ENCODE measurements at regions of chr1 and their contacts with region 1.

Region 1: DNA sequence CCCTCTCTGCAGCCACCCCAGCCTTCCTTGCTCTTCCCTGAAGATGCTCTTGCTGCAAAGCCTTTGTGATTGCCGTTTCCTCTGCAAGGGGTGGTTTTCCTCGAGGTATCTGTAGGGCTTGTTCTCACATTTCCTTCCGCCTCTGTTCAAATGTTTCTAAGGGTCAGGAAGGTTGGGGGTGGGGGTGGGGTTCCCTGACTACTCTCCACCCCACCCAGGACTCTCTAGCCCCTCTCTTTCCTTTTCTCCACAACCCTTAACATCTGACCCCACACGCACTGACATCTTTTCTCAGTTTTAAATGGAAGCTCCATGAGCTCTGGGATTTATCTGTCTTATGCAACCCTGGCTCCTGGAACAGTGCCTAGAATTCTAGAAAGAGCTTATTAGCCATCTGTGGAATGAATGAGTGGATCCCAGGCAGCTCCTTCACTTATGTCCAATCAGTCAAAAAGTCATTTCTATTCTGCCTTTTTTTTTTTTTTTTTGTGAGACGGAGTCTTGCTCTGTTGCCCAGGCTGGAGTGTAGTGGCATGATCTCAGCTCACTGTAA is 27.3 kb upstream of the ZNF362 start:
- DNase-seq: peak in 2 of 10 donors; percentile 12 to 69
- H3K4me3 ChIP-seq: no peak overlapping the region
- H3K27ac ChIP-seq: peak overlapping the region in 6 of 59 donors; percentile 20 to 46 (median 32)
- H3K27me3 ChIP-seq: no peaks in the 10 kb centered on the region
- CTCF ChIP-seq: no peak

Region 2: DNA sequence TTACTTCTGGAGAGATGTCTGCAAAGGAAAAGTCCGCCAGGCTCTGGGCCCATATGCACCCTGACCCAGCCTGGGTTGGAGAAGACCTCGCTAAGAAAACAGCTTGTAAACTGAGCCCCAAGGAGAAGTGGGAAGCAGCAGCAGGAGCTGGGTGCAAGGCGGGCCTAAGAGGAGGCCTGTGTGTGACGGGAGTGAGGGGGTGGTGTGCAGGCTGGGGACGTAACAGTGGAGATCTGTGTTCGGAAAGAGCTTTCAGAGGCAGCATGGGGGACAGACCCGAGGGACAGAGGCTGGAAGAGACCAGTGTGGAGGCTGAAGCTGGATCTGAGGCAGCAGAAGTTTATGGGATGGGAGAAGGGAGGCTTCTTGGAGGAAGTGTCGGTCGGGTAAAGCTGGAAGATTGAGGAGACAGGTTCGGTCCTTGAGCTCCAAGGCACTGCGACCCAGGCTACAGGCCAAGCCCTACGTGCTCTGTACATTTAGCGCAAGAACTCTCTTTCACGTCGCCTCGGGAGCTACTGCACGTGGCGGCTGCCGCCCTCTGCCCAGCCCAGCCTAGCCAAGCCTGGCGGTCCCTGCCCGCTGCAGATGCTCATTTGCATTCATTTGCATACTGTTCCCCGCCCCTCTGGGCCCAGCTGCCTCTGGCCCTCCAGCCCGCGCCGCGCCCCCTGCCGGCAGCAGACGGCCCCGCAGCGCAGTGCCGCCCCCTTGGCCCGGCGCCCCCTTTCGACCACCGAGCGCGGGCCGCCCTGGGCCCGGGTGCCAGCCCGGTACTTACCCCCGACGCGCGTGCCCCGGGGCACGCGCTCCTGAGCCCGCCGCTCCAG is 336.4 kb before region 1 on chr1:
- intact Hi-C with region 1: no loop called
- DNase-seq: peak; percentile 72 to 90 (median 86)
- H3K4me3 ChIP-seq: peak overlapping the region; percentile 25 to 77 (median 62)
- H3K27ac ChIP-seq: peak overlapping the region in 56 of 59 donors; percentile 40 to 88 (median 79)
- H3K27me3 ChIP-seq: peaks cover 0 to 13% (median 0%) of the 10 kb centered on the region in 45 donors
- CTCF ChIP-seq: peak in 55 of 56 donors; percentile 31 to 94 (median 75)

Region 3: DNA sequence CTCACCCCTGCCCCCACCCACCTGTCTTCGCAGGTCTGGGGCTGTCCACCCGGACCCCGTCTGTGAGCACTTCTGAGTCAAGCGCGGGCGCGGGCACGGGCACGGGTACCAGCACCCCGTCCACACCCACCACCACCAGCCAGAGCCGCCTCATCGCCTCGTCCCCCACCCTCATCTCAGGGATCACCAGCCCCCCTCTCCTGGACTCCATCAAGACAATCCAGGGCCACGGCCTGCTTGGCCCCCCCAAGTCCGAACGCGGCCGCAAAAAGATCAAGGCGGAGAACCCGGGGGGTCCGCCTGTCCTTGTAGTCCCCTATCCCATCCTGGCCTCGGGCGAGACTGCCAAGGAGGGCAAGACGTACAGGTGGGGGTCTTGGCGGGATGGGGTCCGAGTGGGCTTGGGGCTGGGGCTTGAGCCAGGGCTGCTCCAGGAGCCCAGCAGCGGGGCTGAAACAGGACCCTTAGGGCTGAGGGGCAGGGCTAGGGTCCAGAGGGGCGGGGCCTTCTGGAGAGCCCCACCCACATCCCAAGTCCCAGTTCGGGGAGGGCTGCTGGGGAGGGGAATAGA is 51.2 kb after region 1 on chr1:
- intact Hi-C with region 1: no loop called
- DNase-seq: peak in 1 of 10 donors; percentile 11
- H3K4me3 ChIP-seq: no peak overlapping the region
- H3K27ac ChIP-seq: no peak overlapping the region
- H3K27me3 ChIP-seq: no peaks in the 10 kb centered on the region
- CTCF ChIP-seq: no peak

Region 4: DNA sequence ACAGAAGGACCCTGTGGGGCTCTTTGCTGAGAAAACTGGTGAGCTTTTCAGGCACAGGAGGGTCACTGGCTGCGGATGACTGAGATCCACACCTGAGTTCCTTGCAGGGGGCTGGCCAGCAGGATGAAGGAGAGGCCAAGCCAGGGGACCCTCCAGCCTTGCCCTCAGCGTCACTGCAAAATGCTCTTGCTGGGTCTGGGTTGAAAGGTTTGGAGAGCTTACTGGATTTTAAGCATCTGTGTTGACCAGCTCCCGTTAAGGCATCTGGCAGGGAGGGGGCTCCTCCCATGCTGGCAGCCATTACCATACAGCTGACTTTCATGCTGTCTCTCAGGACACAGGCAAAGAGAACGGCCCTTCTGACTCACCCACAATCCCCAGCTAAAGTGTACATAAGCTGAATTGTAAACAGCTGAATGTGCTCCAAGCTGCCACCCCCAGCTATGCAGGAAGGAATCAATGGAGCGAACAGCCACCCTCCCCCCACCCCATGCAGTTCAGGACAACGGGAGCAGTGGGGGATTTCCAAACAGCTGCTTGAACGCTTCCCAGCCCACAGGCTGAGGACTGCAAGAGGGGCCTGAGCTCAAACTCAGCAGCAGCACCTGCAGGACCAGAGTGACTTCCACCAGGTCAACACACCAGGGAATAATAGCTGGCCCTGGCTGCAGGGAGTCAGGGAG is 113.2 kb after region 1 on chr1:
- intact Hi-C with region 1: no loop called
- DNase-seq: peak in 9 of 10 donors; percentile 47 to 89 (median 82)
- H3K4me3 ChIP-seq: peak overlapping the region in 52 of 59 donors; percentile 1 to 54 (median 30)
- H3K27ac ChIP-seq: peak overlapping the region; percentile 56 to 99 (median 92)
- H3K27me3 ChIP-seq: no peaks in the 10 kb centered on the region
- CTCF ChIP-seq: peak in 10 of 56 donors; percentile 3 to 29 (median 18)

Region 5: DNA sequence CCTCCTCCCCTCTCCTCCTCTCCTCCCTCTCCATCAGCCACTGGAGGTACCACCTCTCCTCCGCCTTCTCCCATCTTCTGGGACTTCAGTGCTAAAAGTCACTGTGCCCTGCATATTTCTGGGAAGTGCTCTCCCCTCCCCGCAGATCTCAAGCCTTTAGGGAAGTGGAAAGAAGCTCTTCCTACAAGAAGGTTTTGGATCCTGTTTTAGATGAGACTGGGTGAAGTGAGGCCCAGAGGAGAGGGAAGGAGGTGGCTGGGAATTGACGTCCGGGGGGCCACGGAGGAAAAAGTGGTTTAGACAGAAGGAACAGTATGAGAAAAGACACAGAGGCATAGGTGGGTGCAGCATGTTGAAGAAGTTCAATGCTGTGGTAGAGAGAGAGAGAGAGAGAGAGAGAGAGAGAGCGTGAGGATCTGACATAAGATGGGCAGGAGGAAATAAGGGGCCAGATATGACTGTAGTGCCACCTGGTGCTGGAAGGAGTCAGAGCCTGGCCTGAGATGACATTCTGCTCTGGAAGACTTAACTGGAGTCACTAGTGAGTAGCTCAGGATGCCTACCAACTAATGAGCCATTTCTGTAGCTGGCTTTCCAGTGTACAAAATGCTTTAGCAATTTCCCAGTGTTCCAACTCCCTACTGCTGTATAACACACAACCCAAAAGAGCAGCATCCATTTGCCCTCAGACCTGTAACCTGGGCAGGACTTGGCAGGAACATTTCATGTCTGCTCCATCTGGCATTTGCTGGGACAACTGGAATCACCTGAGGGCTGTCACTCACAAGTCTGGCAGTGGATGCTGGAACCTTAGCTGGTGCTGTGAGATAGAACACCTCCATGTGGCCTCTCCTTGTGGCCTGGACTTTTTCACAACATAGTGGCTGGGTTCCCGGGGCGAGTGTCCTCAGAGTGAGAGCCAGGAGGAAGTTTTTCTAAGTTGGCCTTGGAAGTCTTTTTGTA is 226.8 kb after region 1 on chr1:
- intact Hi-C with region 1: loop called in 1 of 2 experiments (anchors 10 kb)
- DNase-seq: peak in 5 of 10 donors; percentile 57 to 74 (median 62)
- H3K4me3 ChIP-seq: no peak overlapping the region
- H3K27ac ChIP-seq: peak overlapping the region in 5 of 59 donors; percentile 21 to 52 (median 43)
- H3K27me3 ChIP-seq: no peaks in the 10 kb centered on the region
- CTCF ChIP-seq: peak; percentile 35 to 78 (median 66)

Measured in dorsolateral prefrontal cortex (tissue), 120 donors.